PC-9 (cell line): ENCODE measurements at regions of chr11 and their contacts with region 1.

Region 1: GRCh38 chr11:96012086-96012824 is 88.3 kb upstream of the MTMR2 start:
- DNase-seq: peak; percentile 53 to 65
- H3K4me3 ChIP-seq: no peak overlapping the region
- H3K27ac ChIP-seq: no peak overlapping the region
- H3K4me1 ChIP-seq: peaks cover 24% of the 10 kb centered on the region
- H3K27me3 ChIP-seq: no peaks in the 10 kb centered on the region
- CTCF ChIP-seq: peak; percentile 21; the same call in 1 of the 2 replicates

Region 2: DNA sequence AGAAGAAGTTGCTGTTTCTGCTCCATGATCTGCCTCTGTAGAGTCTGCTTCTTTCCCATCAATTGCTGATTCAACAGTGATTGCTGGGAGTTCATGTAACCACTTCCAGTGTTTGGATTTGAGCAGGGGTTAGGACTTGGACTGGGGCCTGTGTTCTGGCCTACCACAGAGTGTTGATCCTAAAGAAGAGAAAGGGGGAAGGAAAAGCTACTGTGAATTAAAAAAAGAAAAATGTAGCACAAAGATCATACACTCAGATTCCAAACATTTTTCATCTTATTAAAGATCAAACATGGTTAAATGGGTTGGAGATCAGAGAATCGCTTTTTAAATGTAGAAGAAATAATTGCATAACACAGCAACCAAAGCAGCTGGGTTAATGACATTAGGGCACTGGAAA is 20.7 kb before region 1 on chr11:
- CTCF ChIA-PET with region 1: no interaction called
- POLR2A ChIA-PET with region 1: no interaction called
- intact Hi-C with region 1: loop called (anchors 2 kb)
- DNase-seq: peak in 1 of 2 experiments; percentile 56
- H3K4me3 ChIP-seq: no peak overlapping the region
- H3K27ac ChIP-seq: peak overlapping the region; percentile 75
- H3K4me1 ChIP-seq: peaks cover 30% of the 10 kb centered on the region
- H3K27me3 ChIP-seq: no peaks in the 10 kb centered on the region
- CTCF ChIP-seq: no peak

Region 3: GRCh38 chr11:96027021-96027420 is 14.8 kb after region 1 on chr11:
- CTCF ChIA-PET with region 1: no interaction called
- POLR2A ChIA-PET with region 1: interaction called, 24 read pairs
- intact Hi-C with region 1: no loop called
- DNase-seq: no peak
- H3K4me3 ChIP-seq: no peak overlapping the region
- H3K27ac ChIP-seq: no peak overlapping the region
- H3K4me1 ChIP-seq: peaks cover under 1% of the 10 kb centered on the region; the same call in 1 of the 2 replicates
- H3K27me3 ChIP-seq: no peaks in the 10 kb centered on the region
- CTCF ChIP-seq: no peak

Region 4: DNA sequence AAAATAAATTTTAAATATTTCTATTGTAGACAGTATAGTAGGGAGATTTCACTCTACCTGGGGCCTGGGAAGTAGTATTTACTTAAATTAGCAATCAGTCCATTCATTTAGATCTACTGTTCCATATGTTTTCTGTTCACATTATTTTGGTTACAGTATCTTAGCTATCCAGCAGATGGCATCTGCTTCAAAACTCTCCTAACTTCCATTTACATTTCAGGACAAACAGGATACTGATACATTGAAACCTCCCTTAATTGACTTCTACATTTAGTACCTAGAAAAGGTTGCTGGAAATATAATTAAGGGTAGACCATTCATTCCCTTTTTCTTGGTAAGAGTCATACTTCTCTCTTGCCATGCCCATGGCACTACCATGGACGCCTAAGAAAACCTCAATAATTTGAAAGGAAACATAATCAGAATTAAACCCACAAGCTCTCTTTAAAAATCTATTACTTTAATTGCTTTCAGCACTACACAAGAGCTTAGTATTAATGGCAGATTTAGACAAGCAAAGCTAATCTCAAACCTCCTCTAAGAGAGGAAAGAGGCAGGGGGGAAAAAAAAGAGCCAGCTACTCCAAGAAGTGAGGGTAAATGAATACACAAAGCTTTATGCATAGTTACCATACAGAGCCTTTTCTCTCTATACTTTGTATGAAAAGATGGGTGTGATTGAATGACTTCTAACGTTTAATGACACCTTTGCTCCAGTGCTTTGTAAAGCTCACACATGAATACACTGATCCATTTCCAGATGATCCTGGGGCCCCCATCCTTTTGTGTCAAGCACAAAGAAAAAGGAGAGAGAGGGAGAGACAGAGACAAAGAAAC is 42.8 kb after region 1 on chr11:
- CTCF ChIA-PET with region 1: no interaction called
- POLR2A ChIA-PET with region 1: no interaction called
- intact Hi-C with region 1: loop called (anchors 1 kb)
- DNase-seq: peak in 1 of 2 experiments; percentile 50
- H3K4me3 ChIP-seq: no peak overlapping the region
- H3K27ac ChIP-seq: peak overlapping the region; percentile 47
- H3K4me1 ChIP-seq: peaks cover 64% of the 10 kb centered on the region
- H3K27me3 ChIP-seq: no peaks in the 10 kb centered on the region
- CTCF ChIP-seq: peak; percentile 79

Region 5: DNA sequence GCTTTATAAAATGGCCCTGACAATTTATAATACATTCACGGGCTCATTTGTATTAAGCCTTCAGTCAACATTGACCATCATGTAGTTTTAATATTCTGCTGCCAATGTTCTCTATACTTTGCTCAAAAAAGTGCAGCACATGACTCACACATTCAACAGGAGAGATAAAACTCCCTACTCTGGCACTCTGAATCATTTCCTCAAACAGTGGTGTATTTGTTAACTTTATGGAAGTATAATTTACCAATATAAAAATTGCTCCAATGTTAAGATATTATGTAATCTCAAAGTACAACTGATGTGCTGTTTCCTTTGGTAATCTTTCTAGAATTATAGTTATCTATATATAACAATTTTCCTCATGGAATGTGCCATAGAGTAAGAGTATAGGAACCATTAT is 290.8 kb after region 1 on chr11:
- CTCF ChIA-PET with region 1: no interaction called
- POLR2A ChIA-PET with region 1: no interaction called
- intact Hi-C with region 1: no loop called
- DNase-seq: peak in 1 of 2 experiments; percentile 93
- H3K4me3 ChIP-seq: peak overlapping the region; percentile 9; the same call in 1 of the 2 replicates
- H3K27ac ChIP-seq: peak overlapping the region; percentile 79
- H3K4me1 ChIP-seq: peaks cover 63% of the 10 kb centered on the region
- H3K27me3 ChIP-seq: no peaks in the 10 kb centered on the region
- CTCF ChIP-seq: no peak